Endothelial cell of umbilical vein (primary cell): ENCODE measurements at regions of chr10 and their contacts with region 1.

Region 1: DNA sequence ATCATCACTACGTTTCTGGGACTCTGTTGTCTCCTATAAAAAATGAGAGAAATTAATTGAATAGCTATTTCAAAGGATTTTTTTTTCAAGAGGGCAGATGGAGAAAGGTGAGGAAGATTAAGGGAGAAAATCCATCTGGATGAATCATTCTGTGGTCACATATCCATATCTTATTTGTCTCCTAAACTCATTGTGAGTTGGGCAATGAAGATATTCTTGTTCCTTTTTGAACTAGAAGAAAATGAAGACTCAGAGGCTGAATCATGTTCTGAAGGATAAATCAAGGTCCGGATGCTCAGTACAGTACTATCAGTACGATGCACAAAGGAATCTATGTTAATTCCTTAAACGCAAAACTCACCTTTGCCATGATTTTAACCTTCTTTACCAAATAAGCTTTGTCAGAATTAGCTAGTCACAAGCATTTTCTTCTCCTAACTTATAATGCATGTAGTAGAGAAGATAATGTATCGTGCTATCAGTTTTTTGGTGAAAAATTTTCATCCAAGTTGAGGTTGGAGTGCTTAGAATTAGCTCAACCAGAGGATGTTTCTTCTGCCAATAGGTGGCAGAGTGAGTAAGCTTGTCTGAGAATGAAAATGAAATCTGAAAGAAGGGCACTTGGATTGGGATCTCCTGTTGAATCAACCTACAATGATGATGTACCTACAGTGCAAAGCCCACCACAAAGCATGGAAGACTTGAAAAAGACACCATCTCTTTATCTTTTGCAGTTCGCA is 446.9 kb downstream of the KIF20B start:
- DNase-seq: peak; percentile 39
- H3K4me3 ChIP-seq: no peak overlapping the region
- H3K27ac ChIP-seq: no peak overlapping the region
- H3K4me1 ChIP-seq: no peaks in the 10 kb centered on the region
- H3K27me3 ChIP-seq: peaks cover 0 to 1% of the 10 kb centered on the region in 2 experiments
- CTCF ChIP-seq: peak; percentile 28 to 54
- POLR2A ChIP-seq: no peak

Region 2: GRCh38 chr10:90288391-90288933 is 140.2 kb after region 1 on chr10:
- CTCF ChIA-PET with region 1: interaction called, 23 read pairs
- POLR2A ChIA-PET with region 1: no interaction called
- dilution Hi-C with region 1: no loop called
- intact Hi-C with region 1: loop called (anchors 2 kb)
- DNase-seq: peak; percentile 68
- H3K4me3 ChIP-seq: no peak overlapping the region
- H3K27ac ChIP-seq: no peak overlapping the region
- H3K4me1 ChIP-seq: peaks cover 6% of the 10 kb centered on the region
- H3K27me3 ChIP-seq: peaks cover 0 to 4% of the 10 kb centered on the region in 2 experiments
- CTCF ChIP-seq: peak in 1 of 2 donors; percentile 24
- POLR2A ChIP-seq: no peak

Region 3: GRCh38 chr10:90321131-90321816 is 173.0 kb after region 1 on chr10:
- CTCF ChIA-PET with region 1: no interaction called
- POLR2A ChIA-PET with region 1: no interaction called
- dilution Hi-C with region 1: no loop called
- intact Hi-C with region 1: no loop called
- DNase-seq: no peak
- H3K4me3 ChIP-seq: no peak overlapping the region
- H3K27ac ChIP-seq: no peak overlapping the region
- H3K4me1 ChIP-seq: peaks cover 15% of the 10 kb centered on the region
- H3K27me3 ChIP-seq: no peaks in the 10 kb centered on the region
- CTCF ChIP-seq: no peak
- POLR2A ChIP-seq: no peak

Region 4: DNA sequence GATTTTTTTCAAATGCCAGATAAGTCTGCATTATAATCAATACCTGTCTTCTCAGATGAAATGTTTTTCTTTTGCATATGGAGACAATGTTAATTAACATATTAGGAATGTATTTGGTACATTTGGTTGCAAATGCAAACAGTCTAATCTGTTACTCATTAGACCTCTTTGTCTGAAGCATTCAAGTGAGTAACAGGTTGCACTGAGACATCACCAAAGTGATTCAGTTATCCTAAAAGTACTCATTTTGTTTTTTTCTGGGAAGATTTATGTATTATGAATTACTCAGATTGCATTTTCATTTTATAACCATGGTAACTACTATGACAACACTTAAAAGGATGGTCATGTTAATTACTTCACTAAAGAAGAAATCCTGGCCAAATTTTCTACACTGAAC is 195.9 kb after region 1 on chr10:
- CTCF ChIA-PET with region 1: no interaction called
- POLR2A ChIA-PET with region 1: no interaction called
- dilution Hi-C with region 1: no loop called
- intact Hi-C with region 1: no loop called
- DNase-seq: no peak
- H3K4me3 ChIP-seq: no peak overlapping the region
- H3K27ac ChIP-seq: no peak overlapping the region
- H3K4me1 ChIP-seq: no peaks in the 10 kb centered on the region
- H3K27me3 ChIP-seq: peaks cover 8 to 23% of the 10 kb centered on the region in 2 experiments
- CTCF ChIP-seq: no peak
- POLR2A ChIP-seq: no peak

Region 5: DNA sequence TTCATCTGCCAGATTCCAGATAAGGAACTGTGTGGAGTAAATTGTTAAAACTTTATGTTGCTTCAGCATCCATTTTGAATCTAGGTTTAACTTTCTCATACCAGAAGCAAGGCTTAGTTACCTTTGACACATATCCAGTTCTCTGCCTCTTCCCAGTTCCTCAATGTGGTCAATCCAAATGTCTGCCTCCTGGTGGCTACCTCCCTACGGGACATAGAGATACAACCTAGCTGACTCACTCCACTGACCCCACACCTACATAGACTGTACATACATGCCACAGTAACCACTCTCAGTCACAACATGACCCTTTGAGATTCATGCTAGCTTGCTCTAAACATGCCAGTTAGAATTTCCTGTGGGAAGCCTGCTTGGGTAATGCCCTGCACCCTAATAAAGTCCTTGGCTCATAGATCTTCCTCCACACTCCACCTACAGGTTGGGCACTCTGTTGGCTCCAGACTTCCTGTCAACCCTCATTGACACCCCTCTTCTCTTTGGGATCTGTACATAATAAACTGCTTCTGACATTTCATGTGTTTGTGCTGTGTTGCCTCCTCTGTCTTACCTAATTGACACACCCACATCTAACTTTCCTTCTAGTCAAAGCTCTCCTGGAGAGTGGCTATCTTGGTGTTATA is 431.4 kb after region 1 on chr10:
- CTCF ChIA-PET with region 1: interaction called, 10 read pairs
- POLR2A ChIA-PET with region 1: no interaction called
- dilution Hi-C with region 1: no loop called
- intact Hi-C with region 1: no loop called
- DNase-seq: peak; percentile 5
- H3K4me3 ChIP-seq: no peak overlapping the region
- H3K27ac ChIP-seq: no peak overlapping the region
- H3K4me1 ChIP-seq: no peaks in the 10 kb centered on the region
- H3K27me3 ChIP-seq: no peaks in the 10 kb centered on the region
- CTCF ChIP-seq: peak in 1 of 2 donors; percentile 19
- POLR2A ChIP-seq: no peak

Region 6: GRCh38 chr10:90652519-90652918 is 504.2 kb after region 1 on chr10:
- CTCF ChIA-PET with region 1: interaction called, 17 read pairs
- POLR2A ChIA-PET with region 1: no interaction called
- dilution Hi-C with region 1: no loop called
- intact Hi-C with region 1: no loop called
- DNase-seq: peak; percentile 10
- H3K4me3 ChIP-seq: no peak overlapping the region
- H3K27ac ChIP-seq: no peak overlapping the region
- H3K4me1 ChIP-seq: no peaks in the 10 kb centered on the region
- H3K27me3 ChIP-seq: no peaks in the 10 kb centered on the region
- CTCF ChIP-seq: peak in 1 of 2 donors; percentile 19
- POLR2A ChIP-seq: no peak

Region 7: DNA sequence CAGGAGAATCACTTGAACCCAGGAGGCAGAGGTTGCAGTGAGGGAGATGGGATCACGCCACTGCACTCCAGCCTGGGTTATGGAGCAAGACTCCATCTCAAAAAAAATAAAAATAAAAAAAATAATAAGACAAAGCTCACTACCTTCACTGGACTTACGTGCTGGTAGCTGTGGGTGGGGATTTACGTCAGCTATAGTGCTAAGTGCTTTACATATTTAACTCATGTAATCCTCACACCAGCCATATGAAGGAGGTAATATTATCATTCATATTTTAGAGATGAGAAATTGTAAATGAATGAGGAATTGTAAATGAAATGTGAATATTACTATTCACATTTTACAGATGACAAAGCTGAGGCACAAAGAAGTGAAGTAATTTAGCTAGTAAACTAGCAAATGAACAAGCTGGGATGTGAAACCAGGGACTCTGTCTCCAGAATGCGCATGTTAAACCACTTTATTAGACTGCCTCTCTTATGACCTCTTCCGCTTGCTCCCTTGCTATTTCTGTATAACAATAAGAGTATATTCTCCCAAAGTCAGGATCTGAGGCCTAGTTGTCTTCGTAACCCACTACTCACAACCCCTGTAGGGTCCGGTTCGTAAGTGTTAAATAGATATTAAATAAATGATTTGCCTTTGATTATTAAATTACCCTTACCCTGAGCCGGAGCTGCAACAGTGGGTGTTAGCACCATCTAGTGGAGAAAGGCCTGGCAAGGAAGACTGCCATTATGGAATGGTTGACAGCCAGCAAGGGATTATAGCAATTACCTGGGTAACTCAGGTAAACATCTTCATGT is 639.3 kb after region 1 on chr10:
- CTCF ChIA-PET with region 1: interaction called, 29 read pairs
- POLR2A ChIA-PET with region 1: no interaction called
- dilution Hi-C with region 1: no loop called
- intact Hi-C with region 1: loop called (anchors 5 kb)
- DNase-seq: peak; percentile 47
- H3K4me3 ChIP-seq: no peak overlapping the region
- H3K27ac ChIP-seq: no peak overlapping the region
- H3K4me1 ChIP-seq: no peaks in the 10 kb centered on the region
- H3K27me3 ChIP-seq: peaks cover 9 to 25% of the 10 kb centered on the region in 2 experiments
- CTCF ChIP-seq: peak; percentile 72 to 78
- POLR2A ChIP-seq: no peak